ENCODE measurements at regions of chr19 and their contacts with region 1.

Region 1: GRCh38 chr19:35352448-35353304 is 5.0 kb downstream of the FFAR1 start:
- DNase-seq: no peak
- ATAC-seq: peak; percentile 75

Region 2: GRCh38 chr19:35468637-35469036 is 116.0 kb after region 1 on chr19:
- intact Hi-C with region 1: loop called (anchors 1 kb)
- DNase-seq: no peak
- ATAC-seq: peak; percentile 62

Region 3: GRCh38 chr19:35495107-35496064 is 142.7 kb after region 1 on chr19:
- intact Hi-C with region 1: loop called (anchors 2 kb)
- DNase-seq: peak; percentile 87
- ATAC-seq: peak; percentile 92

Region 4: GRCh38 chr19:35592226-35592625 is 239.6 kb after region 1 on chr19:
- intact Hi-C with region 1: loop called (anchors 5 kb)
- DNase-seq: no peak
- ATAC-seq: no peak